Activated CD4-positive, alpha-beta memory T cell treated with anti-CD3 and anti-CD28 coated beads for 36 hours (primary cell): ENCODE measurements at regions of chr12 and their contacts with region 1.

Region 1: GRCh38 chr12:48988030-48988649 is 10.0 kb downstream of the WNT1 start:
- DNase-seq: peak; percentile 86
- H3K4me3 Mint-ChIP-seq: no peak overlapping the region
- H3K27ac Mint-ChIP-seq: no peak overlapping the region
- H3K4me1 Mint-ChIP-seq: peaks cover 5% of the 10 kb centered on the region
- H3K27me3 Mint-ChIP-seq: peaks cover 24% of the 10 kb centered on the region

Region 2: DNA sequence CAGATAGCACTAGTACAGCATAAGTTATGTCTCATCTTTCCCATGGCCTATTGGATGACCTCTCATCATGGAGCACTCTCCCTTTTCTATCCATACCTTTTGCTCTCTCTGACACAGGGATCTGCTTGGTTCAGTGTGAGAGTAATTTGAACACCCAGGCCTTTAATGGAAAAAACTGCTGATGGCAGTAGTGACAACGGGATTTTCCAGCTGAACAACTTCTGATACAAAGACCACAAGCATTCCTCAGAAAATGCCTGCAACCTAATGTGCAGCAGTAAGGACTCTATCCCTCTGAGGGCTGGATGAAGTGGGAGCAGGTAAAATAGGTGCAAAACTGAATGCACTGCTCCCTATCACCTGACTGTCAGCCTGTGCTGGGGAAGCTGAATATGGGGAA is 357.1 kb before region 1 on chr12:
- CTCF ChIA-PET with region 1: no interaction called
- POLR2A ChIA-PET with region 1: no interaction called
- intact Hi-C with region 1: no loop called
- DNase-seq: no peak
- H3K4me3 Mint-ChIP-seq: no peak overlapping the region
- H3K27ac Mint-ChIP-seq: no peak overlapping the region
- H3K4me1 Mint-ChIP-seq: no peaks in the 10 kb centered on the region
- H3K27me3 Mint-ChIP-seq: peaks cover 10% of the 10 kb centered on the region

Region 3: GRCh38 chr12:48857278-48857994 is 130.7 kb before region 1 on chr12:
- CTCF ChIA-PET with region 1: interaction called, 37 read pairs
- POLR2A ChIA-PET with region 1: no interaction called
- intact Hi-C with region 1: loop called (anchors 2 kb)
- DNase-seq: no peak
- H3K4me3 Mint-ChIP-seq: no peak overlapping the region
- H3K27ac Mint-ChIP-seq: no peak overlapping the region
- H3K4me1 Mint-ChIP-seq: peaks cover 9% of the 10 kb centered on the region
- H3K27me3 Mint-ChIP-seq: peaks cover 2% of the 10 kb centered on the region

Region 4: DNA sequence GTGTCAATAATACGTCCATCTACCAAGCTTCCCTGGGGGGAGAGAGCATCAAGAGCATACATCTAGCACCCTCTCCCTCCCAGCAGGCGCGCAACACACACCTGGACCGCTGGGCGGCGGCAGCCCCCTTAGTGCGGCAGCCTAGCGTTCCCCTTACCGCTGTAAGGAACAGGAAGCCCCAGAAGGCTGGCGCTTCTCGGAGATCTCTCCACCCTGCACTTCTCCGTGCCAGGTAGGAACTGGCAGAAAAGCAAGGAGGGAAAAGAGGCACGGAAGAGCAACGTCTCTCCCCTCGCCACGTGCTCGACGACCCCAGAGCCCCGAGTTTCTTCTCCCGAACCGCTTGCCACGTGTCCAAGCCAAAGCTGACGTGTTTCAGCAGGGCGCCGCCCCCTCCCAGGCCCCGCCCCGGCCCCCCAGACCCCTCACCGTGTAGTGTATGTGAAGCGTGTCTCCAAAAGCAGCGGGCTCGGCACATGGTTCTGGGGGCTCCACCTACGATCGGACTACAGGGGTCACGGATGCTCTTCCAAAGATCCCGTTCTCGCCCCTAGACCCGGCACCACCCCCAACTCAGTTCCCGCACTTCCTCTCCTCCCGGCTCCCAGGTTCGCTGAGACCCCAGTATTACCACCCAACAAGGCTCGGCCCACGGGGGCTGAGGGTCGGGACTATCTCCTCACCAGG is 63.4 kb before region 1 on chr12:
- CTCF ChIA-PET with region 1: interaction called, 22 read pairs
- POLR2A ChIA-PET with region 1: no interaction called
- intact Hi-C with region 1: no loop called
- DNase-seq: peak; percentile 82
- H3K4me3 Mint-ChIP-seq: peak overlapping the region; percentile 88
- H3K27ac Mint-ChIP-seq: peak overlapping the region; percentile 94
- H3K4me1 Mint-ChIP-seq: peaks cover 47% of the 10 kb centered on the region
- H3K27me3 Mint-ChIP-seq: no peaks in the 10 kb centered on the region

Region 5: GRCh38 chr12:48943221-48943620 is 44.9 kb before region 1 on chr12:
- CTCF ChIA-PET with region 1: interaction called, 44 read pairs
- POLR2A ChIA-PET with region 1: no interaction called
- intact Hi-C with region 1: no loop called
- DNase-seq: no peak
- H3K4me3 Mint-ChIP-seq: no peak overlapping the region
- H3K27ac Mint-ChIP-seq: no peak overlapping the region
- H3K4me1 Mint-ChIP-seq: peaks cover 4% of the 10 kb centered on the region
- H3K27me3 Mint-ChIP-seq: no peaks in the 10 kb centered on the region

Region 6: GRCh38 chr12:48977315-48978281 is 10.5 kb before region 1 on chr12:
- CTCF ChIA-PET with region 1: interaction called, 202 read pairs
- POLR2A ChIA-PET with region 1: interaction called, 3 read pairs
- intact Hi-C with region 1: no loop called
- DNase-seq: peak; percentile 87
- H3K4me3 Mint-ChIP-seq: peak overlapping the region; percentile 59
- H3K27ac Mint-ChIP-seq: peak overlapping the region; percentile 70
- H3K4me1 Mint-ChIP-seq: peaks cover 55% of the 10 kb centered on the region
- H3K27me3 Mint-ChIP-seq: peaks cover 63% of the 10 kb centered on the region